A673 (cell line): ENCODE measurements at regions of chr15 and their contacts with region 1.

Region 1: DNA sequence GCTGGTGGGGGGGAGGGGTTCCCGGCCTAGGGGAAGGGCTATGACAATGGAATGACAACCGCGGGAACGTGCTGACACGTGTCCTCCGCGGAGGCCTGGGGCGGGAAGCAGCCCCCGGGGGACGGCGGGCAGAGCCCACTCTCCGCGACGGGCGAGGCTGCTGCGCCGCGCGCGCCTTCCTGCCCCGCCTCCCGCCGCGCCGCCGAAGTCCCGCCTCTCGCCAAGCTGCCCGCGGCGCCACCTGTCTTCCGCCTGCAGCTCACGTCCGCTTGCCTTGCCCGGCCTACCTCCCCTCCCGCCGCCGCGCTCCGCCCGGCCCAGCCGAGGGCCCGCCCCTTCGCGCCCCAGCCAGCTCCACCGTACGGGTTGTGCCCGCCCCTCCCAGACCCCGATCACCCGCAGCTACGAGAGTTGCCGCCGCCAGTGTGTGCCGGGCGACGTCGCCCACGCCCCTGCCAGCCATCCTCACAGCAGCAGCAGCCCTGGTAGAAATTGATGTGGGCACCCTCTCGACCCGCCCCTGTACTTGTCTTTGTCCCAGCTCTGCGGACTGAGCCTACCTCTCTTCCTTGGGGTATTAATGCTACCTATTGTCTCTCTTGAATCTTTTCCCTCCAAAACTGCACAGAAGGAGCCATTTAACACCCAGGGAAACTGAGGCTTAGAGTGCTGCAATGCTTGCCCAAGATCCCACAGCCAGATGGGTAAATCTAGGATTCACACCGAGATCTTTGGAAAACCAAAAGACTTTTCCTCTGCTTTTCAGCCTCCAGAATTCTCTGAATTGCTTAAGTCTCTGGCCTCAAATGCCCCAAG is at the start of gene PARP16:
- DNase-seq: peak; percentile 91
- H3K4me3 ChIP-seq: peak within 1 kb of the TSS; percentile 62
- H3K27ac ChIP-seq: peak within 1 kb of the TSS; percentile 71
- H3K4me1 ChIP-seq: peaks cover 14% of the 10 kb centered on the region
- H3K27me3 ChIP-seq: no peaks in the 10 kb centered on the region
- CTCF ChIP-seq: peak; percentile 25; the same call in 1 of the 2 replicates
- total RNA-seq, gene PARP16: 5.7 and 7.3 TPM in 2 replicates

Region 2: GRCh38 chr15:65110676-65111292 is 176.1 kb before region 1 on chr15:
- CTCF ChIA-PET with region 1: no interaction called
- POLR2A ChIA-PET with region 1: interaction called, 13 read pairs
- intact Hi-C with region 1: no loop called
- DNase-seq: no peak
- H3K4me3 ChIP-seq: no peak overlapping the region
- H3K27ac ChIP-seq: no peak overlapping the region
- H3K4me1 ChIP-seq: no peaks in the 10 kb centered on the region
- H3K27me3 ChIP-seq: no peaks in the 10 kb centered on the region
- CTCF ChIP-seq: no peak

Region 3: DNA sequence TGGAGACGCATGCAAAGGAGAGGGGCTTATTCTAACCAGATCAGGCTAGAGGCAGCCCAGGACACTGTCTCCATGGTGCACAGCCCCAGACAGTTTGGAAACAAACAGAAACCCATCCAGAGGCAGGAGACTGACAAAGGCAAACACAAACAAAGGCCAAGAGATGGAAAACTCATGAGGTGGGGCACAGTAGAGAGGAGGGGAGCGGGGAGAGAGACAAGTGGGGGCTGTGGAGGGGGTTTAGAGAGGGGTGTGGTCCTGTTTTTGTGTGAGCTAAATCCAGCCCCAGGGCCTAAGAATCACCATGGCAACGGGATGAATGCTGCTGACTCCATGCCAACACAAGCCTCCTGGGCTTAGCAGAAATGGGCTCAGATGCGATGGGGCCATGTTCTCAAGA is 32.6 kb before region 1 on chr15:
- CTCF ChIA-PET with region 1: no interaction called
- POLR2A ChIA-PET with region 1: interaction called, 10 read pairs
- intact Hi-C with region 1: no loop called
- DNase-seq: no peak
- H3K4me3 ChIP-seq: no peak overlapping the region
- H3K27ac ChIP-seq: no peak overlapping the region
- H3K4me1 ChIP-seq: no peaks in the 10 kb centered on the region
- H3K27me3 ChIP-seq: no peaks in the 10 kb centered on the region
- CTCF ChIP-seq: no peak

Region 4: DNA sequence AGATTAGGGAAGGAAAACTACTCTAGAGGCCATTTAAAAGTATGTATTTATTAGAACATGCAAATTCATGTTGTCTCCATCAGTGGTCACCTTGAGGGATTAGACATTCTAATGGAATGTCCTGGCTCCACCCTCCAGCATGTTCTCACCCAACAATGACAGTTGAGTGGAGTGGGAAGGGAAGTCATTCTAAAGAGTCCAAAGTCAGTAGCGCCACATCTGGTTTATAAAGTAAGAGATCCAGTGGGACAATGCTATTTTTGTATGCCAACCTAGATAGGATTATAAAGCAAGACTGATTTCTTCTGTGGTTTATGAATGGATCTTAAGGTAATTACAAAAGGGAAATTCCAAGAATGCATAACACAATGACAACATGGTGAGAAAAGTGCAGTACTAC is 368.1 kb after region 1 on chr15:
- CTCF ChIA-PET with region 1: no interaction called
- POLR2A ChIA-PET with region 1: no interaction called
- intact Hi-C with region 1: no loop called
- DNase-seq: no peak
- H3K4me3 ChIP-seq: no peak overlapping the region
- H3K27ac ChIP-seq: no peak overlapping the region
- H3K4me1 ChIP-seq: no peaks in the 10 kb centered on the region
- H3K27me3 ChIP-seq: no peaks in the 10 kb centered on the region
- CTCF ChIP-seq: no peak